ENCODE measurements at regions of chr17 and their contacts with region 1.

Region 1: DNA sequence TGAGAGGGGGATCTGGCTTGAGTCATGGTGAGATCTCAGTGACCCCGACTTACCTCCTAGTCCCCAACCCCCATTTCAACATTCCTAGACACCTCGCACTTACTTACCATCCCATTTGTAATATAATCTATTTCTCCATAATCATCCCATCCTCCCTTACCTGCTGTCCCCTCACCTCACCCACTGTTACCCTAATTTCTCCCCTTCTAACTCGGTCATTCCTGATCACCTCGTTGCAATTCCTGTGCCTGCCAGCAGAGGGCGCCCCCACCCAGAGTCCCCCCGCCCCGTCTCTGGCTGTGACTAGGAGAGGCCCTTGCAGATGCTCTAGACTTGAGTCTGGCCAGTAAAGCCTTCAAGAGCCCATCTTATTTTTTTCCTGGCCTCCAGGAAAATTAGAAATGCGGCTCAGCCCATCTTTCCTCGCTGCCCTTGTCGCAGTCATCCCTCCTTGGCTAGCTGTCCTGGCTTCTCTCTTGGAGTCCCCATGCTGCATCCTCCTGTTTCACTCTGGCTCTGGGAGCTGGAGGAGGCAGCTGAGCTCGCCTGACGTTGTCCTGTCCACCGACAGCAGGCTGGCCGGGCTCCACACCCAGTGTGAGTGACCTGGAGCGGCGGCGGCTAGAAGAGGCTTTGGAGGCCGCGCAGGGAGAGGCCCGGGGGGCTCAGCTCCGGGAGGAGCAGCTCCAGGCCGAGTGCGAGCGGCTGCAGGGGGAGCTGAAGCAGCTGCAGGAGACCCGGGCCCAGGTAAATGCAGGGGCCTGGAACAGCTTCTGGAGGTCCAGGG is 5.0 kb downstream of the TBKBP1 start:
- DNase-seq: peak; percentile 60
- H3K4me3 Mint-ChIP-seq: no peak overlapping the region
- H3K27ac Mint-ChIP-seq: no peak overlapping the region
- H3K4me1 Mint-ChIP-seq: peaks cover 33% of the 10 kb centered on the region
- H3K27me3 Mint-ChIP-seq: peaks cover 2% of the 10 kb centered on the region

Region 2: GRCh38 chr17:47663912-47664625 is 34.9 kb before region 1 on chr17:
- intact Hi-C with region 1: loop called (anchors 5 kb)
- DNase-seq: peak; percentile 36
- H3K4me3 Mint-ChIP-seq: no peak overlapping the region
- H3K27ac Mint-ChIP-seq: peak overlapping the region; percentile 61
- H3K4me1 Mint-ChIP-seq: peaks cover 28% of the 10 kb centered on the region
- H3K27me3 Mint-ChIP-seq: no peaks in the 10 kb centered on the region

Region 3: GRCh38 chr17:47675380-47676198 is 23.4 kb before region 1 on chr17:
- intact Hi-C with region 1: no loop called
- DNase-seq: no peak
- H3K4me3 Mint-ChIP-seq: no peak overlapping the region
- H3K27ac Mint-ChIP-seq: peak overlapping the region; percentile 26
- H3K4me1 Mint-ChIP-seq: peaks cover 18% of the 10 kb centered on the region
- H3K27me3 Mint-ChIP-seq: no peaks in the 10 kb centered on the region

Region 4: DNA sequence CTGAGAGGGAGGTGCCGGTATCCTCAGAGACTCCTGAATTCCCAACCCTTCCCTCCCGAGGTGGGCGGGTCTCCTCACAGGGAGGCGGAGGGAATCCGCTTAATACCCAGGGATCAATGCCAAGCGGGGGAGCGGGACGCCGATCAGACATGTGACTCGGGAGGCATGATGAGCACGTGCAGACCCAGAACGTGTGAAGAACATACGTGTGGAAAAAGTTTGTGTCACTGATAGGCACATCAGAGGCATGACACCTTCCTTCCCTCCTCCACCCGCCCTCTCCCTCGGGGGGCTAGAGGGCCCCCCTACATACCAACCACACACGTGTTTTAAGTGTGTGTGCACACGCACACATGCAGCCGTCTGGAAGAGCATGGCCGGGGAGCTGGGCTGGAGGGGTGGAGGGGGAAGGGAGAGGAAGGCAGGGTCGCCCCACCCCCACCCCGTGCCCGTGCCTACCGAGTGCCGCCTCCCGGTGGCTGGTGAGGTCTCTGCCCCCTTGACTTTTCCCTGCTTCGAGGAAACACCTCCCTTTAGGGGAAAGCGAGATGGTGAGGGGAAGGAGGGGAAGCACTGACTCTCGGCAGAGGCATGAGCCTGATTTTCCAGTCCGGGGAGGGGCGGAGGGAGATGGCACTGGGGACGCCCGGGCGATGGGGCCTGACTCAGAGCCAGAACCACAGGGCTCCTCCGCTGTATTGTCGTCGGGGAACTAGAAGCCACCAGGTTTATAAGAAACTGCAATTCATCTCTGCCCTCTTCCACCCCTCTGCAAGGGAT is 22.0 kb after region 1 on chr17:
- intact Hi-C with region 1: loop called (anchors 1 kb)
- DNase-seq: peak; percentile 82
- H3K4me3 Mint-ChIP-seq: peak overlapping the region; percentile 64
- H3K27ac Mint-ChIP-seq: peak overlapping the region; percentile 95
- H3K4me1 Mint-ChIP-seq: peaks cover 73% of the 10 kb centered on the region
- H3K27me3 Mint-ChIP-seq: no peaks in the 10 kb centered on the region

Region 5: GRCh38 chr17:47733047-47733673 is 34.2 kb after region 1 on chr17 and contains the start of gene TBX21:
- intact Hi-C with region 1: loop called (anchors 1 kb)
- DNase-seq: peak; percentile 82
- H3K4me3 Mint-ChIP-seq: peak within 1 kb of the TSS; percentile 100
- H3K27ac Mint-ChIP-seq: peak within 1 kb of the TSS; percentile 91
- H3K4me1 Mint-ChIP-seq: peaks cover 62% of the 10 kb centered on the region
- H3K27me3 Mint-ChIP-seq: no peaks in the 10 kb centered on the region
- total RNA-seq, gene TBX21: 40.4 and 40.6 TPM in 2 replicates

Region 6: DNA sequence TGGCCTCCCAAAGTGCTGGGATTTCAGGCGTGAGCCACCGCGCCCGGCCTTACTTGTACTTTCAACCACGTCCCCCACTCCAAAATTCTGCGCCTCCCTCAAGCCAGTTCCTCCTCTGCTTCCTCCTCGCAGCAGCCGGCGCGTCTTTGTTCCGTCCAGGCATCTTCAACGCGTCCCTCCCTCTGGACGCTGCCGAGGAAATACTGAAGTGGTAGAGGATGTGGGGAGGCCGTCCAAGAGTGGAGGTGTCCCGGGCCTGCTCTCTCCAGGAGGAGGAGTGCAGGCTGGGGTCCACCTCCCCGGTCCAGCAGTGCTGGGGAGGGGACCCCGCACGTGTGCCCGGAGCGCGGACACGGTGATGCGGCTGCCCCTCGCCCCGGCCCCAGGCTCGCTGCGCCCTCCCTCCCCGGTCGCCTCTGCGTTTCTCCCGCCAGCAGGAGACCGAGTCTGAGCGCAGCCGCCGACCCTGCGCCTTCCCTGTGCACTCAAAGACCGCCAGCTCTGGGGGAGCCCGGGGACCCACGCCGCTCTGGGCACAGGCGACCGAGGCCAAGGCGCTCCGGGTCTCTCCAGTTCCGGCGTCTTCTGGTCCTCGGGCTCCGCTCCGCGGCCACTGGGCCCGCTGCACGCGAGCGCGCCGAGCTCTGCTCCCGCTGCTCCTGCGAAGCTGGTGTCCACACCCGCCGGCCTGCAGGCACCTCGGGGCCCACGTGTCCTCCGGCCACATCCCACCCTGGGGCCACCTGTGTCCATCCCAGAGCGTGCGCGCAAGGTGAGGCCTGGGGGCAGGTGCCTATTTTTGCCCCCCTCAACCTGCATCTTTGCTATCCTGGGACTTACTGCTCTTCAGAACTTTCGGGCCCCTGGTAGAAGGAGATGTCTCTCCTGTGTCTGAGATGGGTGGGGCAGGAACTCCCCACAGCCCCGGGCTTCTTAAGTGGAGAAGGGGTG is 90.9 kb after region 1 on chr17:
- intact Hi-C with region 1: loop called (anchors 2 kb)
- DNase-seq: peak; percentile 34
- H3K4me3 Mint-ChIP-seq: peak overlapping the region; percentile 66
- H3K27ac Mint-ChIP-seq: no peak overlapping the region
- H3K4me1 Mint-ChIP-seq: peaks cover 12% of the 10 kb centered on the region
- H3K27me3 Mint-ChIP-seq: peaks cover 66% of the 10 kb centered on the region

Region 7: GRCh38 chr17:47802341-47803022 is 103.5 kb after region 1 on chr17:
- intact Hi-C with region 1: loop called (anchors 5 kb)
- DNase-seq: peak; percentile 28
- H3K4me3 Mint-ChIP-seq: no peak overlapping the region
- H3K27ac Mint-ChIP-seq: no peak overlapping the region
- H3K4me1 Mint-ChIP-seq: no peaks in the 10 kb centered on the region
- H3K27me3 Mint-ChIP-seq: peaks cover 3% of the 10 kb centered on the region

Measured in activated T-helper 2 cell treated with anti-CD3 and anti-CD28 coated beads, Interferon-gamma antibody, Interleukin-2, Interleukin-4, amounts not matched to agents 10 μg/mL and 5 μg/mL and 100 μg/mL, durations not matched to agents 14 hours and 24 hours and 36 hours (primary cell).